Ovary (tissue), 10 donors: ENCODE measurements at regions of chr1 and their contacts with region 1.

Region 1: DNA sequence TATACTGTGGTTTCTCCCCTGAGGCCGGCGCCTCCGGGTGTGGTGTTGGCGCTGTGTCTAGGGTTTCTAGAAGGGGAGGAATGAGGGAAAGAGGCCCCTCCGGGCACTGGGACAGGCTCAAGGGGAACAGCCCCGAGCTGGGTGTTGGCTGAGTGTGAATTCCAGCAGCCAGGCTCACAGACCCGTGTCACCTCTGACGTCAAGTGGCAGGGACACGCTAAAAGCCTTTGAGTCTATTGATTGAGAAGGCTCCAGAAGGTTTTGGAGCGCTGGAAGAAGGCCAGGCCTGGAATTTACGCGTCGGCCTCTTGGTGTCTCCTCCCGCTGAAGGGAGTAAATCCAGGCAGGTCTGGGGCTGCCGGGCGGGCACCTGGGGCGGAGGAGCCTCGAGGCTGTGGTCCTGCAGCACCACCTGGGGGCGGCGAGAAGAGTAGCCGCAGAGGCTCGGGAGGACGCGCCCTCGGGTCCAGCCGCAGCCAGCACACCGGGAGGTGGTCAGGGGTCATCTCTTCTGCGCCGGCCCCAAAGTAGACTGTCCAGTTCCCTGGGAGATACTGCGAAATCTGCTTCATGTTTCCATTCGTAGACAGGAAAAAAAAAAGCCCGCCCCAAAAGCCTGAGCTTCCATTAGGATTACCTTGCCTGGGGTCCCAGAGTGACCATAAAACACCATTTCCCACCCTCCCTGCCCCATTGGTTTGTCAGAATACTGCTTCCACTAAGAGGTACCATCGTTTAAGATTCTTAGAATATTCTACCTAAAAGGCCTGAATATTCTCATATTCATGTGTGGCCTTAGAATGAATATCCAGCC is 61.7 kb downstream of the TLR5 start:
- DNase-seq: peak; percentile 82 to 89 (median 85)
- H3K4me3 ChIP-seq: peak overlapping the region; percentile 30
- H3K27ac ChIP-seq: no peak overlapping the region
- H3K4me1 ChIP-seq: no peaks in the 10 kb centered on the region
- H3K27me3 ChIP-seq: no peaks in the 10 kb centered on the region
- CTCF ChIP-seq: peak; percentile 91 to 95 (median 93)
- EP300 ChIP-seq: no peak
- POLR2A ChIP-seq: no peak

Region 2: GRCh38 chr1:222739929-222740328 is 341.5 kb before region 1 on chr1:
- intact Hi-C with region 1: loop called in 1 of 4 experiments (anchors 5 kb)
- DNase-seq: no peak
- H3K4me3 ChIP-seq: no peak overlapping the region
- H3K27ac ChIP-seq: no peak overlapping the region
- H3K4me1 ChIP-seq: no peaks in the 10 kb centered on the region
- H3K27me3 ChIP-seq: no peaks in the 10 kb centered on the region
- CTCF ChIP-seq: no peak
- EP300 ChIP-seq: no peak
- POLR2A ChIP-seq: no peak

Region 3: DNA sequence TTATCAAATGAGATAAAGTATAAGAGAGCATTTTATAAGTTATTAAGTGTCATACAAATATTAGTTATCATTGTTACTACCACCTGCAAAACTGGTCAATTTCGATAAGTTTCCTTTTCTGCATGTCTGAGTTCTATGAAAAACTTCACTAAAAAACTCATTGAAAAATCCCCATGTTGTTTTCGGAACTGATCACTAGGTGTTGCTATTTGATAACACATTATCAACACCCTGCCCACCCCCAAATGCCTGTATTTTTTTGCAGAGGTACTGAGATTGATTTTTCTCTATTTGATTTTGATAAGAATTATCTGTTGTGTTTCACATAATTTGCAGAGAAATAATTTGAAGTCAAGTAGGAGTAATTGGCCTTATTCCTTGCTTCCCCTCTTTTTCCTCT is 288.6 kb before region 1 on chr1:
- intact Hi-C with region 1: loop called (anchors 1 to 5 kb)
- DNase-seq: no peak
- H3K4me3 ChIP-seq: no peak overlapping the region
- H3K27ac ChIP-seq: no peak overlapping the region
- H3K4me1 ChIP-seq: no peaks in the 10 kb centered on the region
- H3K27me3 ChIP-seq: no peaks in the 10 kb centered on the region
- CTCF ChIP-seq: peak in 2 of 3 donors; percentile 52 to 76
- EP300 ChIP-seq: no peak
- POLR2A ChIP-seq: no peak

Region 4: DNA sequence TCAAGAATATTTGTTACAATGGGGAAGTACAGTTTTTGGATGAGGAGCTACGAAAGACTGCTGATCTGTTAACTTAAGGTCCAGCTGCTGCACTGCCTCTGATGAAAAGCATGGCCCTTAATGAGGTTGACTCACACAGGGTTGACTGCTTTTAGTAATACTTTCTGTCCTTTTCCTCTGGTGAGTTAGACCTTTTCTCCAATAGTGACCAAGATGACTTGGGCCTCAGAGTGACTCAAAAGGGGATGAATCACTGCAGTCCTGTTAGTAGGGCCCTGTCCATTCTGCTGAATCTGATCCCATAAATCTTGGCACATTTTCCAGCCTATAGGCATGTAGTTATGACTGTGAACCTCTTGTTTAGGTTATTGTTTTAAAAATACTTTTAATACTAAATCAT is 263.9 kb before region 1 on chr1:
- intact Hi-C with region 1: no loop called
- DNase-seq: no peak
- H3K4me3 ChIP-seq: no peak overlapping the region
- H3K27ac ChIP-seq: no peak overlapping the region
- H3K4me1 ChIP-seq: peaks cover 4% of the 10 kb centered on the region
- H3K27me3 ChIP-seq: no peaks in the 10 kb centered on the region
- CTCF ChIP-seq: no peak
- EP300 ChIP-seq: no peak
- POLR2A ChIP-seq: no peak

Region 5: GRCh38 chr1:222852326-222852725 is 229.1 kb before region 1 on chr1:
- intact Hi-C with region 1: no loop called
- DNase-seq: no peak
- H3K4me3 ChIP-seq: no peak overlapping the region
- H3K27ac ChIP-seq: no peak overlapping the region
- H3K4me1 ChIP-seq: no peaks in the 10 kb centered on the region
- H3K27me3 ChIP-seq: no peaks in the 10 kb centered on the region
- CTCF ChIP-seq: no peak
- EP300 ChIP-seq: no peak
- POLR2A ChIP-seq: no peak

Region 6: DNA sequence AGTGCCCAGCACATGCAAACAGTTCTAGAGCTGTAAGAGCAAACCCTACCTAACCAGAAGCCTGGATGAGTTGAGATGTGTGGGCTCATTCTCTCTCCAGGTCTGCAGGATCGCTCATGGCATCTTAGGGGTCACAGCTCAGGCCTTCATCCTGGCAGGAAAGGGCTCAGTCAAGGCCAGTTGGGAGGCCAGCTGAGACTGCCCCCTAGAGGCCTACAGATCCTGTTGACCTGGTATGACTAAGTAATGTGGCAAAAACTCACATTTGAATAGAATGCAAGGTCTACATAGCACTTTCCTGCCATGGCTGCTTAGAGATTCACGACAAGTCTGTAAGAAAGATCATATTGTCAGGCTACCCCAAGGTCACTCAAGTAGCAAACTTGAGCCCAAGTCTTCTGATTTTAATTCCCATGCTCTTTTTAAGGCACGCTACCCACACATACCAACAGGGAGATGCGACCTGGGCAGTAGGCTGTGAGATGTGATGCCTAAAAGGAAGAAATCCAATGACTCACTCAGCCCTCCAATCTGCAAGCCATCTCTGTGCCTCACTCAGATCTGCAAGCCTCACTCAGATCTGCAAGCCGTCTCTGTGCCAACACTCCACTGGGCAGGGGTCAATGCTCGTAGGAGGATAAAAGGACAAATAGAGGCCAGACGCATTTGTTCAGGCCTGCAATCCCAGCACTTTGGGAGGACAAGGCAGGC is 589.2 kb after region 1 on chr1:
- intact Hi-C with region 1: loop called in 1 of 4 experiments (anchors 10 kb)
- DNase-seq: no peak
- H3K4me3 ChIP-seq: no peak overlapping the region
- H3K27ac ChIP-seq: no peak overlapping the region
- H3K4me1 ChIP-seq: no peaks in the 10 kb centered on the region
- H3K27me3 ChIP-seq: no peaks in the 10 kb centered on the region
- CTCF ChIP-seq: no peak
- EP300 ChIP-seq: no peak
- POLR2A ChIP-seq: no peak